ENCODE measurements at regions of chr2 and their contacts with region 1.

Region 1: DNA sequence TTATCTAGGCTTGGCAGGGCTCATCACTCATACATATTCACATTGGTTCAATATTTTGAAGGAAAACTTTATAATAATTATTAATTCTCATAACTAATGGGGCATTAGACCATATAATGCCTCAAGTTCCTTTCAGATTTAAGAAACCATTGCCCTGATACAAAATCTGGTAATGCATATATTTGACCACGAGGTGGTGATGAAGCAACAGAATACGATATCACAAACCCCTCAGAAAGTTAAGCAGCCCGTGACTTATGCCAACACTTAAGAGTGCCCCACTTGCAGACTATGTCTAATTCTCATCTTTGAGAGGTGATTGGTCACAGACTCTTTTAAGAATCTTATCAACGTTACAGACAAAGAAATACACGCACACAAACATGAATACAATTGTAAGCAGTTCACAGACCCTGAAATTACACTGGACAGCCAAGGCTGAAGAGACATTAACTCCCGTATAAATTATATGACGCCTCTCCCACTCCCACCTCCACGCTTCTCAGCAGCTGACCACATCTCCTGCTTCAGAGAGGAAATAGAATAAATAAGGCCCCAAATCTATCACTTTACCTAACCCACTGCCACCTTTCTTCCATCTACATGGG is 20.7 kb upstream of the DNAH6 start:
- DNase-seq: no peak
- ATAC-seq: peak; percentile 80
- H3K4me3 ChIP-seq: no peak overlapping the region
- H3K27ac ChIP-seq: no peak overlapping the region
- H3K4me1 ChIP-seq: no peaks in the 10 kb centered on the region
- H3K27me3 ChIP-seq: no peaks in the 10 kb centered on the region

Region 2: GRCh38 chr2:84631047-84631446 is 135.4 kb after region 1 on chr2:
- intact Hi-C with region 1: loop called in 1 of 2 experiments (anchors 10 kb)
- DNase-seq: no peak
- ATAC-seq: no peak
- H3K4me3 ChIP-seq: no peak overlapping the region
- H3K27ac ChIP-seq: no peak overlapping the region
- H3K4me1 ChIP-seq: no peaks in the 10 kb centered on the region
- H3K27me3 ChIP-seq: no peaks in the 10 kb centered on the region

Region 3: GRCh38 chr2:84881581-84882414 is 386.2 kb after region 1 on chr2:
- intact Hi-C with region 1: loop called (anchors 5 kb)
- DNase-seq: peak; percentile 85 to 90
- ATAC-seq: peak; percentile 72
- H3K4me3 ChIP-seq: peak overlapping the region; percentile 47 to 52
- H3K27ac ChIP-seq: no peak overlapping the region
- H3K4me1 ChIP-seq: peaks cover 0 to 6% of the 10 kb centered on the region in 2 donors
- H3K27me3 ChIP-seq: no peaks in the 10 kb centered on the region

Region 4: DNA sequence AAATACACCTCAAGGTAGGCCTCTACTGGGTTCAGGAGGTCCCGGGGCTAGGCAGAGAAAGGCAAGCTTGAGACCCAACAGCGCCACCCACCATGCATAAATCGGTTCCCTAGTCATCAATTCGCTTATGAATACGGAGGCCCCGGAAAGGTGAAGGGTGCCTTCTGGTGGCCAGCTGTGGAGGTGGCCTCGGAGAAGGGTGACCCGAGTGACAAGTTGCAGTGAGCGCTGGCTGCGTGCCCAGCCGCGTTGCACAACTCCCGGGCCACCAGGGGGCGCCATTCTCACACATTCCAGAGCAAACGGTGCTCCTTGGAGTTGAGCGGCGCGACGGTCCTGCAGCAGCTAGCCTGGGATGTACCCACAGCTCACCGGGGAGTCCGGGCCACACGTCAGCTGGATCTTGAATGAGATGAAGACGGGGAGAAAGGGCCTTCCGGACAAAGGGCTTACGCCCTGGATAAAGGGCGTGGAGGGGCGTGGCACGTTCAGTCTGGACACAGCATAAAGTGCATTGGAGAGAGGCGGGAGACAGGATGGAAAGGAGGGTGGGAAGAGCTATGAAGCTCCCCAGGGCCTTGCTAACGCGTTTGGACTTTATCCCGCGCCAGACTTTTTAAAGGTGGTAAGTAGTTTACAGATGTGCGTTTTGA is 430.2 kb after region 1 on chr2:
- intact Hi-C with region 1: loop called in 1 of 2 experiments (anchors 5 kb)
- DNase-seq: peak; percentile 96 to 99
- ATAC-seq: peak; percentile 92
- H3K4me3 ChIP-seq: no peak overlapping the region
- H3K27ac ChIP-seq: no peak overlapping the region
- H3K4me1 ChIP-seq: no peaks in the 10 kb centered on the region
- H3K27me3 ChIP-seq: no peaks in the 10 kb centered on the region

Measured in aorta (tissue), 5 donors.